ENCODE measurements at regions of chr17 and their contacts with region 1.

Region 1: GRCh38 chr17:31858642-31859473 is at the start of gene COPRS:
- DNase-seq: peak; percentile 78 to 98 (median 86)

Region 2: GRCh38 chr17:31549525-31550388 is 309.1 kb before region 1 on chr17:
- intact Hi-C with region 1: loop called (anchors 1 kb)
- DNase-seq: peak; percentile 88 to 99 (median 92)

Region 3: DNA sequence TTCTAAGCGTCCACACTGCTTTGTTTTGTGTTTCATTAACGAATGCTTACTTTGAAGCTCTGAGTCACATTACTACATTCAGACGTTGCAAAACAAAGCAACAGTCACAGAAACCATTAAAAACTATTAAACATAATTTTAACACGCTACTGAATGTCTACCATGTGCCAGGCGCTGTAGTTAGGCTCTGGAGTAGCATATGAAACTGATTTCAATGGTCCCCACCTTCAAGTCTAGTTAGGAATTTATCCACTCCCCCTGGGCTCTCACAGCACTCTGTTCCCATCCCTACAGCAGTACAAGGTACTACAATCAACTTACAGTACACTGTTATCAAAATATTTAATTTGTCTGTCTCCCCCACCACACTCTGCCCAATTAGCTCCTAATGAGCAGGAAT is 42.0 kb after region 1 on chr17:
- intact Hi-C with region 1: loop called (anchors 2 kb)
- DNase-seq: no peak